ENCODE measurements at regions of chr4 and their contacts with region 1.

Region 1: DNA sequence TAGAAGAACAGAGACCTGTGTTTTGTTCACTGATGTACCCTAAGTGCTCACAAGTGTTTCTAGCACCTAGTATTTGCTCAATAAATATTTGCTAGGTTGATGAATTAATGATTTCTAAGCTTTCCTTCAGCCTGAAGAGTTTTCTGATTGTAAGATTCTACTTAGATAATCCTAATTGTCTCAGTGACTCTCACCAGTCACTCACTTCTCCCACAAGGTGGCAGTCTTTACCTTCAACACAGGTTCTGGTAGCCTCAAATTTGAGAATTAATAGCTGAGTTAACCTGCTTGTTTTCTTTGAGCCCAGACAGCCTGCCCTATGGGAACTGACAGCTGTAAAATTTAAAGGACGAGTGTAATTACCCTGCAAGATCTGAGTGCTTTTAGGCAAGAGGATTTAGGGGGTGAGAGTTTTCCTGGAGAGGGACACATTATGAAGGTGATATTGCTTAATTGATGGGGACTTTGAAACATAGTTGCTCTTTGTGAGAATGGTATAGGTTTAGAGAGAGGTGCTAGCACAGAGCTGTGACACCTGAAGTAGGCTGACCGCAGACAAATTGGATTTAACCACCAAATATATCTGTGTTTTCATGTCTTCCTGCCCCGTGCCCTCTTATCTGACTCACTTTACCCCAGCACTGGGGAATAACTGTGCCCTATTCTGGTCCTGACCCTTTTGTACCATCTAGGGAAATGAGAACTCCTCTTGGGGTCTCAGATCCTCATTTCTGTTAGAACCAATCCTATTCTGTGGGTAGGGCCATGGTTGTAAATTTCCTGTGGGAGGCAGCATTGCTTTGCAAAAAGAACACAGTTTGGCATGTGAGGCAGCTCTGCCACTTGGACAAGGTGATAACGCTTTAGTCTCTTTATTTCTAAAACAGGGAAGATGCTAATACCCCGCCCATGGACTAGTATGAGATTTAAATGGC is 27.7 kb downstream of the CD38 start:
- DNase-seq: peak; percentile 63
- ATAC-seq: peak; percentile 64
- H3K4me3 Mint-ChIP-seq: no peak overlapping the region
- H3K27ac Mint-ChIP-seq: peak overlapping the region; percentile 21
- H3K4me1 Mint-ChIP-seq: peaks cover 65% of the 10 kb centered on the region
- H3K27me3 Mint-ChIP-seq: no peaks in the 10 kb centered on the region

Region 2: GRCh38 chr4:15729910-15730533 is 75.8 kb before region 1 on chr4:
- CTCF ChIA-PET with region 1: interaction called, 12 read pairs
- POLR2A ChIA-PET with region 1: no interaction called
- DNase-seq: peak; percentile 60
- ATAC-seq: peak; percentile 53
- H3K4me3 Mint-ChIP-seq: no peak overlapping the region
- H3K27ac Mint-ChIP-seq: no peak overlapping the region
- H3K4me1 Mint-ChIP-seq: peaks cover 28% of the 10 kb centered on the region
- H3K27me3 Mint-ChIP-seq: peaks cover 13% of the 10 kb centered on the region

Region 3: DNA sequence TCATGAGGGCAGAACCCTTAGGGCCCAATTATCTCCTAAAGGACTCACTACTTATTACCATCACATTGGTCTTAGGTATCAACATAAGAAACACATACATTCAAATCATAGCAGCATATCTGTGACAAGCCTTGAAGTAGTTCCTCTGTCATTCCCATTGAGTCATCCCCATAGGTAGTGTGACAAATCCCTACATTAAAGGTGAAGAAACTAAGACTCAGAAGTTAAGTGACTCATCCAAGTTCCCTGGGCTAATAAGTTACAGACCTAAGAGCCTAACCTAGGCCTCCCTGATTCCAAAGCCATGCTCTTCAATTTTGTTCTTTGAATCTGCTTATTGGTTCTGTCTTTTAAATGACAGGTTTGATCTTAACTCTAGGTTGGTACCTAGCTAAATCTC is 30.5 kb after region 1 on chr4:
- CTCF ChIA-PET with region 1: no interaction called
- POLR2A ChIA-PET with region 1: no interaction called
- DNase-seq: no peak
- ATAC-seq: no peak
- H3K4me3 Mint-ChIP-seq: no peak overlapping the region
- H3K27ac Mint-ChIP-seq: no peak overlapping the region
- H3K4me1 Mint-ChIP-seq: peaks cover 32% of the 10 kb centered on the region
- H3K27me3 Mint-ChIP-seq: no peaks in the 10 kb centered on the region

Region 4: GRCh38 chr4:15901998-15902397 is 96.1 kb after region 1 on chr4:
- CTCF ChIA-PET with region 1: no interaction called
- POLR2A ChIA-PET with region 1: no interaction called
- DNase-seq: no peak
- ATAC-seq: no peak
- H3K4me3 Mint-ChIP-seq: no peak overlapping the region
- H3K27ac Mint-ChIP-seq: no peak overlapping the region
- H3K4me1 Mint-ChIP-seq: peaks cover 9% of the 10 kb centered on the region
- H3K27me3 Mint-ChIP-seq: peaks cover 31% of the 10 kb centered on the region

Measured in activated CD8-positive, alpha-beta T cell treated with anti-CD3 and anti-CD28 coated beads, Interleukin-2, amount 10 ng/mL, durations not matched to agents 7 days and 5 days (primary cell).